CD8-positive, alpha-beta T cell (primary cell): ENCODE measurements at regions of chr17 and their contacts with region 1.

Region 1: GRCh38 chr17:10748531-10749163 is 18.8 kb upstream of the TMEM220 start:
- DNase-seq: no peak
- ATAC-seq: no peak
- H3K4me3 ChIP-seq: no peak overlapping the region
- H3K4me3 Mint-ChIP-seq: no peak overlapping the region
- H3K27ac ChIP-seq: no peak overlapping the region
- H3K27ac Mint-ChIP-seq: no peak overlapping the region
- H3K4me1 ChIP-seq: peaks cover 17% of the 10 kb centered on the region
- H3K4me1 Mint-ChIP-seq: peaks cover 18% of the 10 kb centered on the region
- H3K27me3 ChIP-seq: peaks cover 0 to 2% of the 10 kb centered on the region in 2 experiments
- H3K27me3 Mint-ChIP-seq: peaks cover 2% of the 10 kb centered on the region
- CTCF ChIP-seq: no peak

Region 2: GRCh38 chr17:10471853-10472252 is 276.8 kb before region 1 on chr17:
- CTCF ChIA-PET with region 1: no interaction called
- POLR2A ChIA-PET with region 1: no interaction called
- intact Hi-C with region 1: no loop called
- DNase-seq: no peak
- ATAC-seq: no peak
- H3K4me3 ChIP-seq: no peak overlapping the region
- H3K4me3 Mint-ChIP-seq: no peak overlapping the region
- H3K27ac ChIP-seq: no peak overlapping the region
- H3K27ac Mint-ChIP-seq: no peak overlapping the region
- H3K4me1 ChIP-seq: no peaks in the 10 kb centered on the region
- H3K4me1 Mint-ChIP-seq: no peaks in the 10 kb centered on the region
- H3K27me3 ChIP-seq: no peaks in the 10 kb centered on the region
- H3K27me3 Mint-ChIP-seq: peaks cover 1% of the 10 kb centered on the region
- CTCF ChIP-seq: no peak

Region 3: GRCh38 chr17:10737168-10737622 is 11.5 kb before region 1 on chr17:
- CTCF ChIA-PET with region 1: interaction called, 20 read pairs
- POLR2A ChIA-PET with region 1: no interaction called
- intact Hi-C with region 1: no loop called
- DNase-seq: peak in 5 of 9 experiments; percentile 7 to 60 (median 35)
- ATAC-seq: peak; percentile 51
- H3K4me3 ChIP-seq: no peak overlapping the region
- H3K4me3 Mint-ChIP-seq: peak overlapping the region; percentile 29
- H3K27ac ChIP-seq: no peak overlapping the region
- H3K27ac Mint-ChIP-seq: no peak overlapping the region
- H3K4me1 ChIP-seq: peaks cover 6% of the 10 kb centered on the region
- H3K4me1 Mint-ChIP-seq: peaks cover 11% of the 10 kb centered on the region
- H3K27me3 ChIP-seq: no peaks in the 10 kb centered on the region
- H3K27me3 Mint-ChIP-seq: peaks cover 4% of the 10 kb centered on the region
- CTCF ChIP-seq: peak; percentile 46